ENCODE measurements at regions of chr6 and their contacts with region 1.

Region 1: GRCh38 chr6:42453031-42453653 is 1.4 kb upstream of the TRERF1 start:
- DNase-seq: peak; percentile 92 to 97 (median 96)
- ATAC-seq: peak; percentile 94 to 95
- H3K4me3 ChIP-seq: peak overlapping the region; percentile 78
- H3K27ac ChIP-seq: peak overlapping the region; percentile 69
- H3K4me1 ChIP-seq: no peaks in the 10 kb centered on the region
- H3K27me3 ChIP-seq: no peaks in the 10 kb centered on the region

Region 2: GRCh38 chr6:42367353-42368011 is 85.7 kb before region 1 on chr6:
- intact Hi-C with region 1: loop called in 1 of 4 experiments (anchors 5 kb)
- DNase-seq: no peak
- ATAC-seq: peak; percentile 9 to 30
- H3K4me3 ChIP-seq: no peak overlapping the region
- H3K27ac ChIP-seq: no peak overlapping the region
- H3K4me1 ChIP-seq: peaks cover 5% of the 10 kb centered on the region
- H3K27me3 ChIP-seq: no peaks in the 10 kb centered on the region

Region 3: GRCh38 chr6:42537536-42537935 is 84.4 kb after region 1 on chr6:
- intact Hi-C with region 1: loop called in 1 of 4 experiments (anchors 5 kb)
- DNase-seq: no peak
- ATAC-seq: no peak
- H3K4me3 ChIP-seq: no peak overlapping the region
- H3K27ac ChIP-seq: no peak overlapping the region
- H3K4me1 ChIP-seq: no peaks in the 10 kb centered on the region
- H3K27me3 ChIP-seq: no peaks in the 10 kb centered on the region

Measured in right cardiac atrium (tissue), 5 donors.